AG04449 (cell line): ENCODE measurements at regions of chr7 and their contacts with region 1.

Region 1: DNA sequence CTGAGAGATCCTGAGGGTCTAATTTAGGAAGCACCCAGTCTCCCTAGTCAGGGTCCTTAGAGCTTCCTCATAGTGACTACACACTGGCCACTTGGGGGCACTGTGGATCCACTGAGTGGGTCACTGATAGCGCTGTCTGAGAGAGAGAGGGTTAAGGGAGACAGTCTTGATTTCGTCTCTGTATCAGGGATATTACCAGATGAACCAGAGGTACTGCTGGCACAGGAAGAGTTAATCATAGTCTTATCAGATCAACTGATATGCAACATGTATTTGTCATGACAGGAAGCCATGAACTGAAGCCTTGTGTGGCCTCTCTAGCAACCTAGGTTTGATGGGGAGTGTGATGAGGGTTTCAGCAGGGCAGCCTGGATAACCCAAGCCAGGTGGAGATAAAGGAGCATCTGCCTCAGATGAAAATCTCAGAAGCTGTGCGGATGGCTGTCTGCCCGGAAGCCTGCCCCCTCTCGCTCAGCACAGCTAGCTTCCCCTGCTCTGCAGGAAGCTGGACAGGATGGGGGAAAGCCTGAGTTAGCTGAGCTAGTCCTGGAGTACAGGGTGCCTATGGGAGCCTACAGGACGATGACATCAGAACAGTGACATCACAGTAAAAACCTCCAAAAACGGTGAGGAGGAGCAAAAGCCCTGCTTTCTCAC is 214.0 kb upstream of the PRSS1 start:
- DNase-seq: no peak
- H3K4me3 ChIP-seq: no peak overlapping the region; the same call in 1 of the 2 replicates
- CTCF ChIP-seq: peak; percentile 89

Region 2: DNA sequence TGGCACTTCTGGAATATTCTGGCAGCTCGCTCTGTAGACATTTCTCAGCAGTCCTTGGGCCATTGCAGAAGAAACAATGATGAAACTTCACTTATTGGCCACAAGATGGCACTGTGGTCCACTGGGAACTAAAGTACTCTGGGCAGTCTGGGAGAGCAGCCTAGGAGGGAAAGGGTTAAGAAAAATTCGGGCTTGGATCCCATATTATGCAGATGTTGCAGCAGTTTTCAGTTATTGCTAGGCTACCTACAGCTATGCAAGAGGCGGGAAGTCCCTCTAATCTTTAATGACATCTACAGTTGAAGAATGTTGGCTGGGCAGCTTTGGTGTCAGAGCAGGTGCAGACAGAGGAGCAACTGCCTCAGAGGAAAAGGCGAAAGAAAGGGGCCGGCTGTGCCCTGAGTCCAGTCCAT is 75.7 kb before region 1 on chr7:
- CTCF ChIA-PET with region 1: interaction called, 2,267 read pairs
- POLR2A ChIA-PET with region 1: no interaction called
- DNase-seq: no peak
- H3K4me3 ChIP-seq: no peak overlapping the region
- CTCF ChIP-seq: peak; percentile 69

Region 3: GRCh38 chr7:142557971-142558582 is 22.8 kb after region 1 on chr7:
- CTCF ChIA-PET with region 1: interaction called, 55 read pairs
- POLR2A ChIA-PET with region 1: no interaction called
- DNase-seq: no peak
- H3K4me3 ChIP-seq: no peak overlapping the region
- CTCF ChIP-seq: peak; percentile 65

Region 4: GRCh38 chr7:142587578-142588191 is 52.4 kb after region 1 on chr7:
- CTCF ChIA-PET with region 1: interaction called, 147 read pairs
- POLR2A ChIA-PET with region 1: interaction called, 3 read pairs
- DNase-seq: no peak
- H3K4me3 ChIP-seq: no peak overlapping the region
- CTCF ChIP-seq: peak; percentile 71

Region 5: DNA sequence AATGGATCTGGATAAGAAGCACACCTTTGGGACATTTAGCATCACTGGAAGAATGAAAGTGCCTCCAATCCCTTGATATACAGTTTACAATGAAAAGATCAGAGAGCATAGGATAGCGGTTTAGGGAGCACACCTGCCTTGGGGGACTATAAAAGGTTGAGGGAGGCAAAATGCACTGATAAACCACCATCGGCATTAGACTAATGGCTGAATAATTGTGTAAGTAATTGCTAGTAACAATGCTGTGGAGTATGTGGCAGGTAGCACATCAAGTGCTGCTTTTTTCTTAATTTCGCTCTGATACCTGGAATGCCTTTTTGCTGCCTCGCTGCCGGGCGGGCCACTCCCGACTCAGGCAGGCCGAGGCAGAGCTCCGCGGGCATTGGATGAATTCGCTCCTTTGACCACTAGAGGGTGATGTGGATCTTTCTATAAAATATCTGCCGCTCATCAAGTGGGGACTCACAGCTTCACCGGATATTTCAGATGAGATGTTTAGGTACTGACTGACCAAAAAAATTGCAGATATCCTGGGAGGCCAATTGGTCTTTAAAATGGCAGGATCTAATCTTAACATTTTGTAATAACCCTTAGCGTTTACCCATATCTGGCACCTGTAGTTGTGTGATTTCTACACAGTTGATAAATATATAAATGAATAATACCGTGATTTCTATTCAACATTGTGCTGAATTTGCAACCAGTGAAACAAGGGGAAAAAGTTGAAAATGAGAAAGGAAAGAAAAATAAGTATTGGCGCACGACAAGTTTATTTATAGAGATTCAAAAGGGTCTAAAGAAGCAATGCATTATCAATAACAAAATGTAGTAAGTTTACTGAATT is 97.3 kb after region 1 on chr7:
- CTCF ChIA-PET with region 1: interaction called, 92 read pairs
- POLR2A ChIA-PET with region 1: no interaction called
- DNase-seq: no peak
- H3K4me3 ChIP-seq: no peak overlapping the region
- CTCF ChIP-seq: peak; percentile 65

Region 6: GRCh38 chr7:142703655-142704305 is 168.5 kb after region 1 on chr7:
- CTCF ChIA-PET with region 1: no interaction called
- POLR2A ChIA-PET with region 1: no interaction called
- DNase-seq: no peak
- H3K4me3 ChIP-seq: no peak overlapping the region
- CTCF ChIP-seq: no peak

Region 7: GRCh38 chr7:142796608-142797385 is 261.5 kb after region 1 on chr7:
- CTCF ChIA-PET with region 1: interaction called, 10 read pairs
- POLR2A ChIA-PET with region 1: no interaction called
- DNase-seq: no peak
- H3K4me3 ChIP-seq: peak overlapping the region; percentile 57
- CTCF ChIP-seq: no peak